CD4-positive, alpha-beta memory T cell (primary cell): ENCODE measurements at regions of chr11 and their contacts with region 1.

Region 1: DNA sequence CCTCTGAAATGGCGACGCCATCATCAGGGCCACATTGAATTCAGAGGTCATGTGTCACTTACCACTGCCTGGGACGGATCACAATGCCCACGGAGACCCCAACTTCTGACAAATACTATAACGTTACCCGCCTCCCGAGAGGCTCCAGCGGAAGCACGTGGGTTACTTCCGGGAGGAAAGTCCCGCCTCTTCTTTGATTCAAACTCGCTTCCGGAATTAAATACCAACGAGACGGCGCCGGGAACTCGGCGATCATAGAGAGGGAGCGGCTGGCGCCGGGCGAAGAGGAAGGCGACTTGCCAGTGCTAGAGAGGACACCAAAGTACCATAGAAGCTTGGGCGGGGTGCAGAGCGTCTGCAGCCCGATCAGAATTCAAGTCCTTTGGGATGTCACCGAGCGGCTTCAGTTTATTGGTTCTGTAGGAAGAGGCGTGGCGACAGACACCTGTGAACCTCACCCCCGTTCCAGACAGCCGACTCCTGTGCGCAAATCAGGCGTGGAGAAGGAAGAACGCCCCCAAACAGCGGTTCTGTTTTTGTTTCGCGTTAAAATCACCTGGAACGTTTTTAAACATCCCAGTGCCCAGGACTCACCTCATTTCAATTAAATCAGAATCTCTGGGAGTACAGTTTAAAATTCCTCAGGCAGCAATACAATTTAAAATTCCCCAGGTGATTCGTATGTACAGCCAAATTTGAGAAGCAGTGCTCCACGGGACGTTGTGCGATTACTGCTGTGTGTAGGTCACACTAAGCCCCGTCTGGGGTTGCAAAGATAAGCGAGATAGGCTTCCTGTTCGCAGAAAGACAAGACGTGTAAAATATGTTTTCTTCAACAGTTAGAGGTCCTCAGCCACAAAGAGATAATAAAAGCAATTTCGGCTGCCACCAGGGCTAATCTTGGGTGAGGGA is at the start of gene TIMM10:
- DNase-seq: peak; percentile 93 to 98 (median 96)
- H3K4me3 ChIP-seq: peak within 1 kb of the TSS; percentile 71 to 94
- H3K4me3 Mint-ChIP-seq: peak within 1 kb of the TSS; percentile 88 to 95 (median 90)
- H3K27ac ChIP-seq: peak within 1 kb of the TSS; percentile 88
- H3K27ac Mint-ChIP-seq: peak within 1 kb of the TSS; percentile 92 to 96 (median 95)
- H3K4me1 ChIP-seq: peaks cover 23% of the 10 kb centered on the region
- H3K4me1 Mint-ChIP-seq: peaks cover 9 to 34% (median 26%) of the 10 kb centered on the region in 4 donors
- H3K27me3 ChIP-seq: no peaks in the 10 kb centered on the region
- H3K27me3 Mint-ChIP-seq: no peaks in the 10 kb centered on the region
- total RNA-seq, gene TIMM10: 30.4 to 34.6 TPM

Region 2: DNA sequence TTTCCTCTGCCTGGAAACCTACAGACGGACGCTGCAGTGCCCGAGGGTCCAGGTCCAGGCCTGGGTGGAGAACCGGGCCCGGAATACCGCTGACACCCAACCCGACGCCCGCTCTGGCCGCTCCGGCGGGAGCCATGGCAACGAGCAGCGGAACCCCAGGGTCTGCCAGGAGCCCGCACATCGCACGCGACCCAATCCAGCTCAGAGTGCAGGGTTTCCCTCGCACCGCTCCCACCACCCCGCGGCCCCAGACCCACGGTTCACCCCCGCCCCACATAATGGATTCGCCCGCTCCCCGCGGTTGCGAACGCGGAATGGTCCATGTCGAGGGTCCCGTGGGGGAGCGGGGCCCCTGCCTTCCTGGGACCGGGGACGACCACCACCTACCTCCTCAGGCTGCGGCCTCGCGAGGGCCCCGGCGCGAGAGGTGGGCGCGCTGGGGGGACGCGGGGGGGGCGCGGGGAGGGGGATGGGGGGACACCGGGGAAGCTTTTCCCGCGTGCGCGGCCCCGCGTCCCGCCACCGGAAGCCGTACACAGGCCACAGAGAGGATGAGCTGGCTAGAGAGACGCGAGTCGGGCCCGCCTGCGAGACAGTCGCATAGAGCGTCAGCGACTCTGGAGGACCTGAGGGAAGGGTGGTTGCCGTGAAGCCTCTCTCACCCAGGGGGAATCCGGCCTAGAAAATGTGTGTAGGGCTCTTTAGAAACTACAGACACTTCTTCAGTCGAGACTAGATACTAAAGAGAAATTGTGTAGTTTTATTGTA is 195.3 kb before region 1 on chr11 and contains the start of gene SSRP1:
- CTCF ChIA-PET with region 1: interaction called, 3 read pairs
- POLR2A ChIA-PET with region 1: interaction called, 10 read pairs
- intact Hi-C with region 1: loop called (anchors 1 kb)
- DNase-seq: peak; percentile 87 to 92 (median 88)
- H3K4me3 ChIP-seq: peak within 1 kb of the TSS; percentile 55 to 87
- H3K4me3 Mint-ChIP-seq: peak within 1 kb of the TSS; percentile 86 to 98 (median 94)
- H3K27ac ChIP-seq: peak within 1 kb of the TSS; percentile 85
- H3K27ac Mint-ChIP-seq: peak within 1 kb of the TSS; percentile 96 to 99 (median 98)
- H3K4me1 ChIP-seq: peaks cover 25% of the 10 kb centered on the region
- H3K4me1 Mint-ChIP-seq: peaks cover 23 to 29% (median 25%) of the 10 kb centered on the region in 4 donors
- H3K27me3 ChIP-seq: no peaks in the 10 kb centered on the region
- H3K27me3 Mint-ChIP-seq: no peaks in the 10 kb centered on the region
- total RNA-seq, gene SSRP1: 69.0 to 74.3 TPM

Region 3: GRCh38 chr11:57456960-57457642 is 73.8 kb before region 1 on chr11:
- CTCF ChIA-PET with region 1: interaction called, 187 read pairs
- POLR2A ChIA-PET with region 1: interaction called, 12 read pairs
- intact Hi-C with region 1: loop called (anchors 1 kb)
- DNase-seq: peak; percentile 59 to 72 (median 62)
- H3K4me3 ChIP-seq: peak overlapping the region in 1 of 2 donors; percentile 3
- H3K4me3 Mint-ChIP-seq: peak overlapping the region; percentile 60 to 93 (median 70)
- H3K27ac ChIP-seq: no peak overlapping the region
- H3K27ac Mint-ChIP-seq: peak overlapping the region in 5 of 7 donors; percentile 32 to 83 (median 73)
- H3K4me1 ChIP-seq: peaks cover 40% of the 10 kb centered on the region
- H3K4me1 Mint-ChIP-seq: peaks cover 16 to 31% (median 24%) of the 10 kb centered on the region in 4 donors
- H3K27me3 ChIP-seq: peaks cover 17% of the 10 kb centered on the region
- H3K27me3 Mint-ChIP-seq: peaks cover 20 to 28% of the 10 kb centered on the region in 2 donors

Region 4: DNA sequence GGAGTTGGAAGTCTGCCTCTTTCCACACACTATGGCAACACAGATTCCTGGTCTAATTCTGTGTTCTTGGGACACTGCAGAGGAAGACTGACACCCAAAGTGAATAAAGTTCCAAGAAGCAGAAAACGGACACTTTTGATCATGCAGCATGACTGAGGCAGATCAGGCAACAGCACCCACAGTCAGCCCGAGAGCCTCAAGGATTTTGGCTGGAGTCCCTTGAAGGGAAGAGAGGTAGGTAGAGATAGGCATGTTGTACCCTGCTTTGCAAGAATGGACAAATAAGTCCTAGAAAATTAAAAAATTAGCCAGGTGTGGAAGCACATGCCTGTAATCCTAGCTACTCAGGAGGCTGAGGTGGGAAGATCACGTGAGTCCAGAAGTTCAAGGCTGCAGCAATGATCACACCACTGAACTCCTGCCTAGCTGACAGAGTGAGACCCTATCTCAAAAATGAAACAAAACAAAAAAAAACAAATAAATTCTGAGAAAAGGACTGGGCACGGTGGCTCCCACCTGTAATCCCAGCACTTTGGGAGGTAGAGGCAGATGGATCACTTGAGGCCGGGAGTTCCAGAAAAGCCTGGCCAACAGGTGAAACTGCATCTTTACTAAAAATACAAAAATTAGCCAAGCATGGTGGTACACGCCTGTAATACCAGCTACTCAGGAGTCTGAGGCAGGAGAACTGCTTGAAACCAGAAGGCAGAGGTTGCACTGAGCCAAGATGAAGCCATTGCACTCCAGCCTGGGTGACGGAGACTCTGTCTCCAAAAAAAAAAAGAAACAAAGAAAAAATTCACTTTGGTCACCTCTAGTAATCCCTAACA is 22.3 kb before region 1 on chr11:
- CTCF ChIA-PET with region 1: interaction called, 110 read pairs
- POLR2A ChIA-PET with region 1: interaction called, 23 read pairs
- intact Hi-C with region 1: no loop called
- DNase-seq: no peak
- H3K4me3 ChIP-seq: no peak overlapping the region
- H3K4me3 Mint-ChIP-seq: no peak overlapping the region
- H3K27ac ChIP-seq: no peak overlapping the region
- H3K27ac Mint-ChIP-seq: no peak overlapping the region
- H3K4me1 ChIP-seq: peaks cover 9% of the 10 kb centered on the region
- H3K4me1 Mint-ChIP-seq: peaks cover 14 to 26% (median 18%) of the 10 kb centered on the region in 4 donors
- H3K27me3 ChIP-seq: no peaks in the 10 kb centered on the region
- H3K27me3 Mint-ChIP-seq: no peaks in the 10 kb centered on the region

Region 5: DNA sequence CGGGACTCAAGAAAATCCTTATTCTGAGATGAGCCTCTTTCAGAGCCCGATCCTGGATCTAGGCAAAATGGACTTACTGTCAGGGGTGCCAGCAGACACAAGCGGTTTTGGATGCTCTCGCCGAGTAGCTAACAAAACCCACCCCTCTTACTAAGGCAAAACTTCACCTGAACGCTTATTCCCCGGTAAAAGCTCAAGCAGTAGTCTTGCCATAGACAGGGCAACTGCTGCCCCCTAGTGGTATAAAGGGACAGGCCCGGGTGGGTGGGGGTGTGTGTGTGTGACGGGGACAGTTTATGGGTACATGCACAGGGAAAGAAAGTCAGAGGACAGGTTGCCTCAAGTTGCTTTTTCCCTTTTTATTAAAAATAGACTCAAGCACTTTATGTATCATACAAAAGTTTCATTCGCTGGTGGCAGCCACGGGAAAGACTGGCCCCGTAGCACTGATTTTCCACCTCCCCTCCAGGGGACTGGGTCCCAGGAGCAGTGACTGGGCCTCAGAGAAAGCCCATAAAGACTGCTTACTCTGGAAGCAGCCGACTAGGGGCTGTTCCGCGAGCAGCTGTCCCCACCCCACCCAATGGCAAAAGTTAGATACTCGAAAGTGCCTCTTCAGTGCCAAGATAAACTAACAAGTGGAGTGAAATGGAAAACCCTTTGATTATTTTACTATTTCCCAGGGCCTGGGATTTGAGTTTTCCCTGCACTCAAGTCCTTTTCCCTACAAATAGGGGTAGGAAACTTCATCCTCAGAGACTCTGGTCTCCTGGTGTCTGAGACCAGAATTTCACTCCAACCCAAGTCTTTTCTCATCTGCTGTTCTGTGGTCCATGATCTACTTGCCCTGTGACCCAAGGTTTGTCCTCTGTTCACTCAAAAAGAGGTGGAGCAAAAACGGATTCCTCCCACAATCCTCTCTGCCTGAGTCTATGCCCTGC is 114.2 kb after region 1 on chr11:
- CTCF ChIA-PET with region 1: interaction called, 13 read pairs
- POLR2A ChIA-PET with region 1: no interaction called
- intact Hi-C with region 1: no loop called
- DNase-seq: peak; percentile 82 to 89 (median 86)
- H3K4me3 ChIP-seq: no peak overlapping the region
- H3K4me3 Mint-ChIP-seq: peak overlapping the region in 1 of 8 donors; percentile 67
- H3K27ac ChIP-seq: no peak overlapping the region
- H3K27ac Mint-ChIP-seq: peak overlapping the region in 2 of 7 donors; percentile 62 to 69
- H3K4me1 ChIP-seq: peaks cover 17% of the 10 kb centered on the region
- H3K4me1 Mint-ChIP-seq: peaks cover 18 to 38% (median 28%) of the 10 kb centered on the region in 4 donors
- H3K27me3 ChIP-seq: peaks cover 37% of the 10 kb centered on the region
- H3K27me3 Mint-ChIP-seq: peaks cover 31 to 50% of the 10 kb centered on the region in 2 donors

Region 6: DNA sequence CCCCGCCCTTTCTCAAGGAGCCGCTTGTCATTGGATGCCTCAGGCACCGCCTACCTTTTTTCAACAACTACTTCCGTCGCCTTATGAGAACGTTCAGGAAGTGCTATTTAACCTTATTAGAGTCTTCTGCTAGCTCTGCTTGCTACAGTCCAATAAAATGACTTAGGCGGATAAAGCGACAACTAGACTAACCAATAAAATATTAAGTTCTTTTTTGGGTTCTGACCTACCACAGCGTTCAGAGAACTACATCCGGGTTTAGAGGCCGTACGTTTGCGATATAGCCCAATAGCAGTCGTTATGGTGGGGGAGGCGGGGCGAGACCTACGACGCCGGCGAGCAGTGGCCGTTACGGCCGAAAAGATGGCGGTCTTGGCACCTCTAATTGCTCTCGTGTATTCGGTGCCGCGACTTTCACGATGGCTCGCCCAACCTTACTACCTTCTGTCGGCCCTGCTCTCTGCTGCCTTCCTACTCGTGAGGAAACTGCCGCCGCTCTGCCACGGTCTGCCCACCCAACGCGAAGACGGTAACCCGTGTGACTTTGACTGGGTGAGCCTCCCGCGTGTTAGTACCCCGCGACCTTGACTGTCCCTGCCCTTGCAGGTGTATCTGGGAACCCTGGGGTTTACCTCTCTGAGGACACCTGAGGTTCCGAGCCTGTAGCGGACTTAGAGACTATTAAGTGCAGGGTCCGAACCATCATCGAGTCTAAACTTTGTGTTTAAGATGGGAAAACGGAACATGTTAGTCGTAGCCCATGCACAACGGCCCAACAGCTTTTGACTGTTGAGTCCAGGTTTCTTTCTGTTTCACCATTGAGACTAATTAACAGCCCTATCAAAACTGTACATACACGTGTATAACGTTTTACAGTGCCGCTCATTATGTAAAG is 181.7 kb after region 1 on chr11 and contains the start of gene TMX2:
- CTCF ChIA-PET with region 1: interaction called, 3 read pairs
- POLR2A ChIA-PET with region 1: interaction called, 7 read pairs
- intact Hi-C with region 1: loop called (anchors 1 kb)
- DNase-seq: peak; percentile 89 to 97 (median 94)
- H3K4me3 ChIP-seq: peak within 1 kb of the TSS; percentile 92 to 96
- H3K4me3 Mint-ChIP-seq: peak within 1 kb of the TSS; percentile 93 to 99 (median 98)
- H3K27ac ChIP-seq: peak within 1 kb of the TSS; percentile 96
- H3K27ac Mint-ChIP-seq: peak within 1 kb of the TSS; percentile 91 to 99 (median 98)
- H3K4me1 ChIP-seq: peaks cover 34% of the 10 kb centered on the region
- H3K4me1 Mint-ChIP-seq: peaks cover 30 to 64% (median 43%) of the 10 kb centered on the region in 4 donors
- H3K27me3 ChIP-seq: no peaks in the 10 kb centered on the region
- H3K27me3 Mint-ChIP-seq: no peaks in the 10 kb centered on the region
- total RNA-seq, gene TMX2: 63.6 to 67.1 TPM